Body of pancreas (tissue), 4 donors: ENCODE measurements at regions of chr4 and their contacts with region 1.

Region 1: GRCh38 chr4:184474263-184475095 is at the start of gene IRF2:
- DNase-seq: peak; percentile 96 to 98 (median 97)
- ATAC-seq: peak; percentile 88
- H3K4me3 ChIP-seq: peak within 1 kb of the TSS; percentile 68 to 87
- H3K27ac ChIP-seq: peak within 1 kb of the TSS; percentile 90 to 97 (median 95)
- H3K4me1 ChIP-seq: peaks cover 50% of the 10 kb centered on the region
- H3K27me3 ChIP-seq: no peaks in the 10 kb centered on the region
- CTCF ChIP-seq: peak in 5 of 7 experiments; percentile 7 to 46 (median 27)
- POLR2A ChIP-seq: peak; percentile 88 to 96 (median 93)
- total RNA-seq, gene IRF2: 12.5 to 14.5 TPM

Region 2: GRCh38 chr4:184538023-184538599 is 63.6 kb after region 1 on chr4:
- intact Hi-C with region 1: loop called (anchors 10 kb)
- DNase-seq: peak; percentile 87 to 94 (median 90)
- ATAC-seq: peak; percentile 89
- H3K4me3 ChIP-seq: peak overlapping the region; percentile 27 to 51
- H3K27ac ChIP-seq: peak overlapping the region; percentile 93 to 97 (median 95)
- H3K4me1 ChIP-seq: peaks cover 15% of the 10 kb centered on the region
- H3K27me3 ChIP-seq: no peaks in the 10 kb centered on the region
- CTCF ChIP-seq: peak; percentile 29 to 94 (median 89)
- POLR2A ChIP-seq: no peak